ENCODE measurements at regions of chr3 and their contacts with region 1.

Region 1: DNA sequence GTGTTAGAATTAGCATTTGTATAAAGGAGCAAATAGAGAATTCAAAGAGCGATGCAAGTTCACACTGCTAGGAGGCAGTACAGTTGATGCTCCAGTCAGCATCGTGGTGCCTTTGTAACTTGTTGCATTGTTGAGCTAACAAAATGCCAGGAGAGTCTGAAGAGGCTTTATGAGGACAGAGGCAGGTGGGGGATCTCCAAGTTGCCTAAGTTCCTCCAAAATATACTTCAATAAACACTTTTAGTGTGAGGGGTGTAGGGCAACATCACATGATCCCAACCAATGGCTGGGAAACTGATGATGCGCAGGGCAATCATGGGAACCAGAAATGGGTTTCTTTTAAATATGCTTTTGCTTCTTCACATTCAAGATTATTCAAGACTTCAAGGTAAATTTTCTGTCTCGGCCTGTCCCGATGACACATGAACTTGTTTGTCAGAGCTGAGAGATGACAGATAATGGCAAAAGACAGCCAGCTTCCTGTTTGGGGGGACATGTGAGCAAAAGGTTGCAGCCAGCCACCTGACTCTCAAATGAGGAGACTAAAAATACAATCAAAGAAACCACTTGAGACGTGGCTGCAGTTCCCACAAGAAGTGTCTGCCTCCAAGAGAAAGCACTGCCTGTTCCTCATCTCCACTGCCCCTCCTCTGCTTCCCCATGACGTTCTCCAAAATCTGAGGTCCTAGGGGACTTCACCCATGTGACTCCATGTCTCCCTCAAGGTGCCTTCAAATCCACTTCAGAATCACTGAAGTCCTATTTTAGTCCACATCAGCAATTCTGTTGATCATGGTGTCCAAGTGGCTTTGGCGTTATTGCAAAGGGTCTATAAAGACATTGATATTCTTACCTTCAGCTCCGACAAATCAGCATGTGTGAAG is 39.3 kb downstream of the KLHL6 start:
- DNase-seq: no peak
- ATAC-seq: peak; percentile 68
- H3K4me3 Mint-ChIP-seq: peak overlapping the region; percentile 54
- H3K27ac Mint-ChIP-seq: peak overlapping the region; percentile 90
- H3K4me1 Mint-ChIP-seq: peaks cover 76% of the 10 kb centered on the region
- H3K27me3 Mint-ChIP-seq: no peaks in the 10 kb centered on the region
- CTCF ChIP-seq: no peak

Region 2: GRCh38 chr3:183527428-183528379 is 11.5 kb after region 1 on chr3:
- CTCF ChIA-PET with region 1: interaction called, 5 read pairs
- POLR2A ChIA-PET with region 1: interaction called, 25 read pairs
- intact Hi-C with region 1: loop called (anchors 1 kb)
- DNase-seq: no peak
- ATAC-seq: peak; percentile 83
- H3K4me3 Mint-ChIP-seq: peak overlapping the region; percentile 73
- H3K27ac Mint-ChIP-seq: peak overlapping the region; percentile 87
- H3K4me1 Mint-ChIP-seq: peaks cover 77% of the 10 kb centered on the region
- H3K27me3 Mint-ChIP-seq: no peaks in the 10 kb centered on the region
- CTCF ChIP-seq: no peak

Region 3: GRCh38 chr3:183537295-183537730 is 21.1 kb after region 1 on chr3:
- CTCF ChIA-PET with region 1: interaction called, 4 read pairs
- POLR2A ChIA-PET with region 1: interaction called, 12 read pairs
- intact Hi-C with region 1: loop called (anchors 1 kb)
- DNase-seq: no peak
- ATAC-seq: no peak
- H3K4me3 Mint-ChIP-seq: peak overlapping the region; percentile 39
- H3K27ac Mint-ChIP-seq: peak overlapping the region; percentile 78
- H3K4me1 Mint-ChIP-seq: peaks cover 94% of the 10 kb centered on the region
- H3K27me3 Mint-ChIP-seq: no peaks in the 10 kb centered on the region
- CTCF ChIP-seq: no peak

Region 4: GRCh38 chr3:183576487-183577107 is 60.4 kb after region 1 on chr3:
- CTCF ChIA-PET with region 1: no interaction called
- POLR2A ChIA-PET with region 1: interaction called, 13 read pairs
- intact Hi-C with region 1: no loop called
- DNase-seq: no peak
- ATAC-seq: peak; percentile 47
- H3K4me3 Mint-ChIP-seq: peak overlapping the region; percentile 20
- H3K27ac Mint-ChIP-seq: no peak overlapping the region
- H3K4me1 Mint-ChIP-seq: peaks cover 54% of the 10 kb centered on the region
- H3K27me3 Mint-ChIP-seq: peaks cover 11% of the 10 kb centered on the region
- CTCF ChIP-seq: no peak

Region 5: DNA sequence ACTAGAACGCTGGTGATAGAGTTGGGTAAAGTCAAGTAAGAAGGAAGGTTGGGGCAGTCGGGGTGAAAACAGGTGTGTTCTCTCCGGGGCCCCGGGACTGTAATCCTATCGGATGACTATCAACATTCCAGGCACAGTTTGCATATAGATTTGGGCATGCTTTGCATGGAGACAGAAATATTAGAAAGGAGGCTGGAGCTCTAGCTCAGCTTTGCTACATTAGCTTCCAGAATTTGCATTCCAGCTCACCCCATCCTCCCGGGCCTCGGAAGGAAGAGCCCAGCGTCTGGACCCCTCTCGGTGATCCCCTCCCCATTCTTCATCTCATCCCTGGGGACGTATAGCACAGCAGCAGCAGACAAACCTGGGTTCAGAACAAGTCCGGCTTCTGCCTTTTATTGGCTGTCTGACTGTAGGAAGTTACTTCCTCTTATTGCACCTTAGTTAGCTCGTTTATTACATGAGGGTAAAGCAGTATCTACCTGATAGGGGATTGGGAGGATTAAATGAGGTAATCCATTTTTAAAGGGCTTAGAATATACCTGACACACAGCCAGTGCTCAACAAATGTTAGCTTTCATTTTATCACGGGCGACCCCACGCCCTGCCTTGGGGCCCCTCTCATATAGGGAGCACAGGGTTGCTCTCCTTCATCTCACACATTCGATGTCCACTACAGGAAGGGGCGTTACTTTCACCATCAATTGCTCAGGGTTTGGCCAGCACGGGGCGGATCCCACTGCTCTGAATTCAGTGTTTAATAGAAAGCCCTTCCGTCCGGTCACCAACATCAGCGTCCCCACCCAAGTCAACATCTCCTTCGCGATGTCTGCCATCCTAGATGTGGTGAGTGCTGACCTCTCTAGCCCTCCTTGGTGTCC is 583.8 kb after region 1 on chr3:
- CTCF ChIA-PET with region 1: no interaction called
- POLR2A ChIA-PET with region 1: no interaction called
- intact Hi-C with region 1: no loop called
- DNase-seq: no peak
- ATAC-seq: no peak
- H3K4me3 Mint-ChIP-seq: no peak overlapping the region
- H3K27ac Mint-ChIP-seq: no peak overlapping the region
- H3K4me1 Mint-ChIP-seq: no peaks in the 10 kb centered on the region
- H3K27me3 Mint-ChIP-seq: peaks cover 4% of the 10 kb centered on the region
- CTCF ChIP-seq: no peak

Measured in activated B cell treated with CpG ODN at 0.5 μM for 24 hours (primary cell).